ENCODE measurements at regions of chr9 and their contacts with region 1.

Region 1: GRCh38 chr9:13427587-13427986 is 148.1 kb upstream of the MPDZ start:
- DNase-seq: peak in 3 of 14 experiments; percentile 20 to 42 (median 26)
- ATAC-seq: no peak
- H3K4me3 ChIP-seq: no peak overlapping the region
- H3K4me3 Mint-ChIP-seq: no peak overlapping the region
- H3K27ac ChIP-seq: no peak overlapping the region
- H3K27ac Mint-ChIP-seq: no peak overlapping the region
- H3K4me1 ChIP-seq: no peaks in the 10 kb centered on the region
- H3K4me1 Mint-ChIP-seq: no peaks in the 10 kb centered on the region
- H3K27me3 ChIP-seq: no peaks in the 10 kb centered on the region
- H3K27me3 Mint-ChIP-seq: no peaks in the 10 kb centered on the region
- CTCF ChIP-seq: peak; percentile 52

Region 2: DNA sequence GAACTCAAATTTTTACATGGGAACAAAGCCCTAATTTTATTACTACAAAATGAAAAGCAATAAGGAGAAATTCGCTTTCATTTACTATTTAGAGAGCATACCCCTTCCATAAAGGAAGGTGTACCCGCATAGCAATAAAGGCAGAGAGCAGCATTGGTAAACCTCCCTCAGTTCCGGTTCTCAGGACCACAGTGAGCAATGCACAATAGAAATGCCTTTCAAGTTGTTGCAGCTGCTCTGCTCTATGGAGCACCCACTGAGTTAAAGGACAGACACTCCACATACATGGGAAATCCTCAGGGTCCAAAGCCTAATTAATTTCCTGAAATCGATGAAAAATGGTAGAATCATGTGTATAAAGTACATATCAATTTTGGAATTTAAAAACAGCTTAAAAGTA is 58.2 kb before region 1 on chr9:
- CTCF ChIA-PET with region 1: no interaction called
- POLR2A ChIA-PET with region 1: no interaction called
- intact Hi-C with region 1: no loop called
- DNase-seq: no peak
- ATAC-seq: no peak
- H3K4me3 ChIP-seq: no peak overlapping the region
- H3K4me3 Mint-ChIP-seq: no peak overlapping the region
- H3K27ac ChIP-seq: no peak overlapping the region
- H3K27ac Mint-ChIP-seq: no peak overlapping the region
- H3K4me1 ChIP-seq: no peaks in the 10 kb centered on the region
- H3K4me1 Mint-ChIP-seq: no peaks in the 10 kb centered on the region
- H3K27me3 ChIP-seq: no peaks in the 10 kb centered on the region
- H3K27me3 Mint-ChIP-seq: no peaks in the 10 kb centered on the region
- CTCF ChIP-seq: no peak

Region 3: DNA sequence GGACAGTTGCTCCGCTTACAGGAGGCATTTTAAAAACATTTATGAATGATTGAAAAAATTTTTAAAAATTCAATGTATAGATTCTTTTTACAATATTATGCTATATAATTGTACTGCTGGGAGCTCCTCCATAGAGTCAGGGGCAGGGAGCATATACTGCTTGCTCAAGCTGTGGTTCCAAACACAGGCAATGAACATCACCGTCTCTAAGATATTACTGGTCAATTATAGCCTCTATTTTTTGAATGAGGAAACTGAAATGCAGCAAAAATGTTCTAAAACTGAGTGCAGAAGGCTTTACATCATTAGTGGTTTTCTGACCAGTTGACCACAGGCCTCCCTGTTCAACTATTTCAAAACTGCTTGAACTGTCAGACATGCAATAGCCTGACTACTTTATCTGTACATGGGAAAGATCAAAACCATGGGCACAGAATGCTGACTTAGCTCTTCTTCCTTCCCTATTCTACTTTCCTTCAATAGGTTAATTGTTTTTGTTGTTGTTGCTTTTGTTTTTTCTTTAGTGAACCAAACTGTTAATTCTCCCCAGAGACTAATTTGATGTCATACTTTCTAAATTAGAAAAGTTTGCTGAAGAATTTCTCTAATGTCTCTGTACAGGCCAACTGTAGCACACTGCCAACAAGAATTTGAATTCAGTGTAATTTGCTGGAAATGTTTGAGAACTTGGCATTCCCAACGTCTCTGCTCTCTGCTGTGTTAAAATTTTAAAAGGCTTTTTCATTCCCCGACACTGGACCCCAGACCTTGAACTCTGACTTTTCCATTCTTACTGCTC is 40.5 kb before region 1 on chr9:
- CTCF ChIA-PET with region 1: no interaction called
- POLR2A ChIA-PET with region 1: no interaction called
- intact Hi-C with region 1: no loop called
- DNase-seq: no peak
- ATAC-seq: no peak
- H3K4me3 ChIP-seq: no peak overlapping the region
- H3K4me3 Mint-ChIP-seq: no peak overlapping the region
- H3K27ac ChIP-seq: no peak overlapping the region
- H3K27ac Mint-ChIP-seq: no peak overlapping the region
- H3K4me1 ChIP-seq: no peaks in the 10 kb centered on the region
- H3K4me1 Mint-ChIP-seq: no peaks in the 10 kb centered on the region
- H3K27me3 ChIP-seq: no peaks in the 10 kb centered on the region
- H3K27me3 Mint-ChIP-seq: no peaks in the 10 kb centered on the region
- CTCF ChIP-seq: no peak

Region 4: GRCh38 chr9:13412331-13412730 is 15.3 kb before region 1 on chr9:
- CTCF ChIA-PET with region 1: no interaction called
- POLR2A ChIA-PET with region 1: no interaction called
- intact Hi-C with region 1: no loop called
- DNase-seq: no peak
- ATAC-seq: no peak
- H3K4me3 ChIP-seq: no peak overlapping the region
- H3K4me3 Mint-ChIP-seq: no peak overlapping the region
- H3K27ac ChIP-seq: no peak overlapping the region
- H3K27ac Mint-ChIP-seq: no peak overlapping the region
- H3K4me1 ChIP-seq: no peaks in the 10 kb centered on the region
- H3K4me1 Mint-ChIP-seq: no peaks in the 10 kb centered on the region
- H3K27me3 ChIP-seq: no peaks in the 10 kb centered on the region
- H3K27me3 Mint-ChIP-seq: no peaks in the 10 kb centered on the region
- CTCF ChIP-seq: no peak

Region 5: GRCh38 chr9:14156046-14156445 is 728.5 kb after region 1 on chr9:
- CTCF ChIA-PET with region 1: no interaction called
- POLR2A ChIA-PET with region 1: no interaction called
- intact Hi-C with region 1: loop called in 1 of 2 experiments (anchors 10 kb)
- DNase-seq: no peak
- ATAC-seq: no peak
- H3K4me3 ChIP-seq: no peak overlapping the region
- H3K4me3 Mint-ChIP-seq: no peak overlapping the region
- H3K27ac ChIP-seq: no peak overlapping the region
- H3K27ac Mint-ChIP-seq: no peak overlapping the region
- H3K4me1 ChIP-seq: no peaks in the 10 kb centered on the region
- H3K4me1 Mint-ChIP-seq: peaks cover 7% of the 10 kb centered on the region
- H3K27me3 ChIP-seq: no peaks in the 10 kb centered on the region
- H3K27me3 Mint-ChIP-seq: peaks cover 10% of the 10 kb centered on the region
- CTCF ChIP-seq: no peak

Region 6: DNA sequence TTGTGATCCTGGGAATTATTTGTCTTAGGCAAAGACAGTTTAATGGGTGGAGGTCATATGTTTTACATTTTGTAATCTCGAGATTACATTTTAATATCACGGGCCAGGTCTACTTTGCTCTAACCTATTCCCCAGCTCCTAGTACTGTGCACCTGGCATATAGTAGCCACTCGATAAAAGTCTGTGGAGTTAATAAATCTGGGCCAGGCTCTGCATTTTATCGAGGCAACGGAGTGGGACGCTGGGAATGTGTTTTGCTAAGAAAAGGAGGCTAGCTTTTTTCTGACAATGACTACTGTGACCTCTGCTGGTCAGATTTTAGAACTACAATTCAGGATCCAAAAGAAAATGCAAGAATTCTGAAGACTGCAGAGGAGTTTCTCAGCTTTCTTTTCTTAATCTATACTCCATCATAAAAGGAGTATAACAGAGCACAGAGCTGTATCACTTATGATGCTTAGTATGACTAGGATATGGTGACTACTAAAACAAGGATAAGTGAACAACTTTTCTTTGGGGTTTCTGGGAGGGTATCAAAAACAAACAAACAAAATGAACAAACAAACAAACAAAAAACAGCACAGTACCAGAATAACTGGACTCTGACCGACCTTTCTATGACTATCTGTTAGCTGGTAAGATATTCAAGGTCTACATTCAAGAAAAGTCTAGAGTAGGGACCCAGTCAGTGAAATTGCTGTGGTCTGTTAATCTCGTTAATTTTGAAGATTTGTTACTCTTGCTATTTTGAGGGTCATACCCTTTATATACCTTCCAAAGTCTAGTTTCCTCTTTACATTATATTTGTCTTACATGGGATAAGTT is 1341.0 kb after region 1 on chr9:
- CTCF ChIA-PET with region 1: interaction called, 3 read pairs
- POLR2A ChIA-PET with region 1: no interaction called
- intact Hi-C with region 1: loop called in 1 of 2 experiments (anchors 10 kb)
- DNase-seq: peak in 4 of 14 experiments; percentile 0 to 48 (median 38)
- ATAC-seq: no peak
- H3K4me3 ChIP-seq: no peak overlapping the region
- H3K4me3 Mint-ChIP-seq: no peak overlapping the region
- H3K27ac ChIP-seq: no peak overlapping the region
- H3K27ac Mint-ChIP-seq: no peak overlapping the region
- H3K4me1 ChIP-seq: no peaks in the 10 kb centered on the region
- H3K4me1 Mint-ChIP-seq: no peaks in the 10 kb centered on the region
- H3K27me3 ChIP-seq: no peaks in the 10 kb centered on the region
- H3K27me3 Mint-ChIP-seq: peaks cover 26% of the 10 kb centered on the region
- CTCF ChIP-seq: peak; percentile 78

Measured in CD4-positive, alpha-beta T cell (primary cell).